A549 (cell line): ENCODE measurements at regions of chr1 and their contacts with region 1.

Region 1: GRCh38 chr1:11838349-11839272 is 9.0 kb downstream of the NPPA start:
- DNase-seq: peak; percentile 49 to 83
- ATAC-seq: peak; percentile 84 to 96
- H3K4me3 ChIP-seq: no peak overlapping the region
- H3K27ac ChIP-seq: no peak overlapping the region
- H3K4me1 ChIP-seq: no peaks in the 10 kb centered on the region
- CTCF ChIP-seq: peak; percentile 79
- EP300 ChIP-seq: no peak
- POLR2A ChIP-seq: no peak
- RAD21 ChIP-seq: peak; percentile 81 to 86

Region 2: GRCh38 chr1:11799896-11800295 is 38.7 kb before region 1 on chr1:
- CTCF ChIA-PET with region 1: no interaction called
- POLR2A ChIA-PET with region 1: no interaction called
- DNase-seq: no peak
- ATAC-seq: no peak
- H3K4me3 ChIP-seq: no peak overlapping the region
- H3K27ac ChIP-seq: no peak overlapping the region
- H3K4me1 ChIP-seq: peaks cover 17% of the 10 kb centered on the region
- CTCF ChIP-seq: no peak
- EP300 ChIP-seq: no peak
- POLR2A ChIP-seq: no peak
- RAD21 ChIP-seq: no peak

Region 3: GRCh38 chr1:11823366-11824137 is 15.1 kb before region 1 on chr1:
- CTCF ChIA-PET with region 1: interaction called, 13 read pairs
- POLR2A ChIA-PET with region 1: no interaction called
- DNase-seq: no peak
- ATAC-seq: no peak
- H3K4me3 ChIP-seq: no peak overlapping the region
- H3K27ac ChIP-seq: no peak overlapping the region
- H3K4me1 ChIP-seq: no peaks in the 10 kb centered on the region
- CTCF ChIP-seq: no peak
- EP300 ChIP-seq: no peak
- POLR2A ChIP-seq: no peak
- RAD21 ChIP-seq: no peak

Region 4: GRCh38 chr1:11855430-11855829 is 16.8 kb after region 1 on chr1:
- CTCF ChIA-PET with region 1: interaction called, 21 read pairs
- POLR2A ChIA-PET with region 1: no interaction called
- DNase-seq: no peak
- ATAC-seq: no peak
- H3K4me3 ChIP-seq: no peak overlapping the region
- H3K27ac ChIP-seq: no peak overlapping the region
- H3K4me1 ChIP-seq: no peaks in the 10 kb centered on the region; the same call in 2 of the 3 replicates
- CTCF ChIP-seq: no peak
- EP300 ChIP-seq: no peak
- POLR2A ChIP-seq: no peak
- RAD21 ChIP-seq: no peak

Region 5: DNA sequence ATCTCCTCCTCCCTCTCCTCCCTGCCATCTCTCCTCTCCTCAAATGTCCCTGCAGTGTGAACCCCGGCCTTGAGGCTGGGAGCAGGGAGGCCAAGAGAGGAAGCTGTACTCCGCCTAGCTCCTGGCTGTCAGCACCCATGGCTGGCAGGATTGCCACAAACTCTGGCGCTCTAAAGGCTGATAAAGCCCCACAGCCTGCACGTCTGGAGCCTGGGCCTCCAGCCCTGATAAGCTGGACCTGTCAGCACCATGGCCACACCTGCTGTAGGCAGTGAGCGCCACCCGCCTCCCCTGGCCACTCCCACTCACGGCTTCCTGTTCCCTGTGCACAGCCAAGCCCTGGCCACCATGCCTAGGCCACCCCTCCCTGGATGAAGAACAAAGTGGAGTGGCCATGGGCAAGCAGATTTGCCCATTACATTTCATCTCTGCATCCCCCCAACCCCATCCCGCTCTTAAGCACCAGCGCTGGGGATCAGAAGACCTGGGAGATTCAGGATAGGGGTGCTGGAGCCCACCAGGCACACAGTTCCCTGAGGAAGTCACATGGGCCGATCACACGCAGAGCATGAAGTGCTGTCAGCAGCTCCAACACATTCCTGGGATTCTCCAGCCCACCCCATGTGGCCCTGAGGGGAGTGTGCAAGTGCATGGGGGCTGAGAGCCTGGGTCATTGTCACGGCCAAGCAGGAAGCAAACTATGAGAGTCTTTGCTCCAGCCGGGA is 44.4 kb after region 1 on chr1:
- CTCF ChIA-PET with region 1: interaction called, 14 read pairs
- POLR2A ChIA-PET with region 1: no interaction called
- DNase-seq: no peak
- ATAC-seq: peak in 1 of 2 experiments; percentile 32; a peak in 2 of 6 replicates
- H3K4me3 ChIP-seq: no peak overlapping the region
- H3K27ac ChIP-seq: no peak overlapping the region
- H3K4me1 ChIP-seq: no peaks in the 10 kb centered on the region
- CTCF ChIP-seq: no peak
- EP300 ChIP-seq: no peak
- POLR2A ChIP-seq: no peak
- RAD21 ChIP-seq: no peak

Region 6: GRCh38 chr1:11893907-11894251 is 55.3 kb after region 1 on chr1:
- CTCF ChIA-PET with region 1: interaction called, 48 read pairs
- POLR2A ChIA-PET with region 1: no interaction called
- DNase-seq: peak; percentile 42 to 80
- ATAC-seq: peak; percentile 90 to 94
- H3K4me3 ChIP-seq: no peak overlapping the region
- H3K27ac ChIP-seq: no peak overlapping the region
- H3K4me1 ChIP-seq: no peaks in the 10 kb centered on the region
- CTCF ChIP-seq: peak; percentile 57
- EP300 ChIP-seq: no peak
- POLR2A ChIP-seq: no peak
- RAD21 ChIP-seq: peak; percentile 61 to 80

Region 7: DNA sequence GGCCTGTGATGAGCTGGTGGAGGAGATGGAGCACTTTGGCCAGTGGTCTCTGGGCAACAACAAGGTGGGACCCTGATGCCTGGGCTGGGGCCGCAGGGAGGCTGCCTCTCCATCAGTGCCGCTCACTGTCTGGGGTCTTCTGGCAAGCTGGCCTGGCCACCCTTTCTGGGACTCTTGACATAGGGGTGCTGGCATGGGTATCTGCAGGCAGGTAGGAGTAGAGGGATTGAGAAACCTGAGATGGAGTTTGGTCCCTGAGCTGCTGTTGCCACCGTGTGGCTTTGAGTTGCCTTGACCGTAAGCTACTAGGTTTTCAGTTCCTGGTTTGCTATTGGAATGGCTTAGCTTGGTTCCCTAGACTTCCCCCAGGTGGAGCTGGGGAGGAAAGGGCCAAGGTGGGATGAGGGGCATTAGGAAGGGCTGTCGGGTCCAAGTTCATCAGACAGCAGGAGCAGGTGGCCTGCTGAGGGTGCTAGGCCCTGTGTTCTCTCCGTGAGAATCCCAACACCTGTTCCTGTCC is 128.5 kb after region 1 on chr1:
- CTCF ChIA-PET with region 1: interaction called, 26 read pairs
- POLR2A ChIA-PET with region 1: no interaction called
- DNase-seq: peak; percentile 54 to 82
- ATAC-seq: peak; percentile 92 to 95
- H3K4me3 ChIP-seq: no peak overlapping the region
- H3K27ac ChIP-seq: no peak overlapping the region
- H3K4me1 ChIP-seq: no peaks in the 10 kb centered on the region
- CTCF ChIP-seq: peak; percentile 47
- EP300 ChIP-seq: no peak
- POLR2A ChIP-seq: no peak
- RAD21 ChIP-seq: peak; percentile 63 to 70